Naive thymus-derived CD4-positive, alpha-beta T cell (primary cell): ENCODE measurements at regions of chr17 and their contacts with region 1.

Region 1: DNA sequence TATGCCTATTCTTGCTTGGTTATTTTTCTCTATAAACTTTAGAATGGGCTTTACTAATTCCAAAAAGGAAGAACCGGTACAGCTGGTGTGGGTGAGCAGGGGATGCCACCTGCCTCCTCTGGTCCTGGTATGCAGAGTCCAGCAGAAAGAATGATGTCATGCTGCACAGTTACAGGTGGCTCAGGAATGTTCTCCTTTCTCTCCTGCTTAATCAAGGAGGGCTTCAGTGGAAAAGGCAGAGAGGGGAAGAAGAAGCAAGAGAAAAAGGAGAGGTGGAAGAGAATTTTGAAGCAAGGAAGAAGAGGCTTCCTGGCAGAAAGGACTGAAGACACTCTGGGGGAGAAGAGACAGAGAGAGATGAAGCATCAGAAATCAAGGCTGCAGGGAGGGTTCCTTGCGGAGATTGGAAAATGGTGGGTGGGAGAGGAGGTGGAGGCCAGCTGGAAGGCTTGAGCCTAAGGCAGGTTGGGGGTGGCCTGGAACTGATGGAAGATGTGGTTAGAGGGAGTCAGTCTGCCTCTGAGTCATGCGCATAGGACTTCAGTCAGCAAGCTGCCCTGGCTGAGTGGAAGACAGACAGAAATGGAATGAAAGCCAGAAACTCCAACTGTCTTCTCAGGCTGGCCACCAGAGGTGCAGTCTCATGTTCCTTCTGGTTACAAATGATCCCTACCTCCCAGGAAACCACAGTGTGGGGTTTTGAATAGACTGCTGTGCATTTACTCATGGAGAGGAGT is 64.6 kb upstream of the CRHR1 start:
- DNase-seq: no peak
- ATAC-seq: no peak
- H3K4me3 ChIP-seq: no peak overlapping the region
- H3K4me3 Mint-ChIP-seq: no peak overlapping the region
- H3K27ac ChIP-seq: no peak overlapping the region
- H3K27ac Mint-ChIP-seq: no peak overlapping the region
- H3K4me1 ChIP-seq: no peaks in the 10 kb centered on the region
- H3K4me1 Mint-ChIP-seq: no peaks in the 10 kb centered on the region
- H3K27me3 ChIP-seq: no peaks in the 10 kb centered on the region
- H3K27me3 Mint-ChIP-seq: peaks cover 29 to 54% (median 39%) of the 10 kb centered on the region in 5 donors

Region 2: GRCh38 chr17:45677770-45678169 is 41.7 kb before region 1 on chr17:
- CTCF ChIA-PET with region 1: no interaction called
- POLR2A ChIA-PET with region 1: no interaction called
- intact Hi-C with region 1: loop called in 1 of 2 experiments (anchors 10 kb)
- DNase-seq: no peak
- ATAC-seq: no peak
- H3K4me3 ChIP-seq: no peak overlapping the region
- H3K4me3 Mint-ChIP-seq: no peak overlapping the region
- H3K27ac ChIP-seq: no peak overlapping the region
- H3K27ac Mint-ChIP-seq: no peak overlapping the region
- H3K4me1 ChIP-seq: no peaks in the 10 kb centered on the region
- H3K4me1 Mint-ChIP-seq: no peaks in the 10 kb centered on the region
- H3K27me3 ChIP-seq: no peaks in the 10 kb centered on the region
- H3K27me3 Mint-ChIP-seq: peaks cover 4 to 19% (median 10%) of the 10 kb centered on the region in 5 donors